ENCODE measurements at regions of chr4 and their contacts with region 1.

Region 1: DNA sequence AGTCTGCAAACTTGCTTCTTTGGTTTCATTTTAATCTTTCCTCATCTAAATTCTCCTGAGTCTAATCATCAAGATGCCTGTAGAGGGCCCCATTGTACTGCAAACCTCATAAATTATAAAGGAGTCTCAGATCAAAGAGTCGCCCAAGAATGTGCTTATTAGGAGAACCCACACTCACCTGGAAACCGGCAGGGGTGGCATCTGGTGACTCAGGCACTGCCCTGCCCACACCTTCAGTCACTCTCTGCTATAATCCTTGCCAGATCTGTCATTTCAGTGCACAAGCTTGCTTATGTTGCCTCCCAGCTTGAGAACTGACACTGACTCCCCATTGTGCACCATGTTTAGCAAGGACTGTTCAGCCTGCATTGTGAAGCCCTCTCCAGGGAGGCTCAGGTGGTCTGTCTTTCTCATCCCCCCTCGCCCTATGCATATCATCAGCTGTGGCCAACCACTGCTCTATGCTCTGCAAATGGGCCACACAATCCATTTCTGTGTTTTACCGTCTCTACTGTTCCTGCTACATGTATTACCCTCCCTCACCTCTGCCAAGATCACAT is 12.4 kb downstream of the EPGN start:
- DNase-seq: peak; percentile 85 to 92 (median 92)
- H3K4me3 ChIP-seq: peak overlapping the region in 4 of 7 experiments; percentile 8 to 68 (median 44)
- H3K27ac ChIP-seq: peak overlapping the region in 1 of 2 experiments; percentile 29
- H3K4me1 ChIP-seq: peaks cover 4 to 78% (median 34%) of the 10 kb centered on the region in 4 experiments
- H3K27me3 ChIP-seq: no peaks in the 10 kb centered on the region

Region 2: GRCh38 chr4:74228691-74229640 is 91.7 kb before region 1 on chr4:
- CTCF ChIA-PET with region 1: interaction called, 18 read pairs
- POLR2A ChIA-PET with region 1: interaction called, 4 read pairs
- DNase-seq: peak; percentile 87 to 91 (median 88)
- H3K4me3 ChIP-seq: no peak overlapping the region
- H3K27ac ChIP-seq: no peak overlapping the region
- H3K4me1 ChIP-seq: peaks cover 0 to 22% (median 15%) of the 10 kb centered on the region in 4 experiments
- H3K27me3 ChIP-seq: no peaks in the 10 kb centered on the region

Region 3: GRCh38 chr4:74335341-74336021 is 14.8 kb after region 1 on chr4:
- CTCF ChIA-PET with region 1: interaction called, 15 read pairs
- POLR2A ChIA-PET with region 1: no interaction called
- DNase-seq: no peak
- H3K4me3 ChIP-seq: no peak overlapping the region
- H3K27ac ChIP-seq: no peak overlapping the region
- H3K4me1 ChIP-seq: peaks cover 3 to 34% (median 6%) of the 10 kb centered on the region in 4 experiments
- H3K27me3 ChIP-seq: no peaks in the 10 kb centered on the region

Region 4: DNA sequence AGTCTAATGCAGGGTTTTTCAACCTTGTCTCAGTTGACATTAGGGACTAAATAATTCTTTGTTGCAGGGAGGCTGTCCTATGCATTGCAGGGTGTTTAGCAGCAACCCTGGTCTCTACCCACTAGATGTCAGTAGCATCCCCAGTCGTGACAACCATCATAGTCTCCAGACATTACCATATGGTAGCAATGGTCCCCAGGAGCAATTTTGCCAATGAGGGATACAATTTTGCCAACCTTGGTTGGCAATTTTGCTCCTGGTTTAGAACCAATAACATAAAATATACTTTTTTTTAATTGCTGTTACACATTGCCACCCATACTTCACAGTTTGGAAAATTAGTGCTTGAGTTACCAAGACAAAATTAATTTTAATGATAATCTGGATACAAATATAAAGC is 50.3 kb after region 1 on chr4:
- CTCF ChIA-PET with region 1: interaction called, 60 read pairs
- POLR2A ChIA-PET with region 1: no interaction called
- DNase-seq: peak; percentile 75 to 83 (median 78)
- H3K4me3 ChIP-seq: no peak overlapping the region
- H3K27ac ChIP-seq: peak overlapping the region in 1 of 2 experiments; percentile 38
- H3K4me1 ChIP-seq: peaks cover 0 to 62% (median 16%) of the 10 kb centered on the region in 4 experiments
- H3K27me3 ChIP-seq: no peaks in the 10 kb centered on the region

Region 5: DNA sequence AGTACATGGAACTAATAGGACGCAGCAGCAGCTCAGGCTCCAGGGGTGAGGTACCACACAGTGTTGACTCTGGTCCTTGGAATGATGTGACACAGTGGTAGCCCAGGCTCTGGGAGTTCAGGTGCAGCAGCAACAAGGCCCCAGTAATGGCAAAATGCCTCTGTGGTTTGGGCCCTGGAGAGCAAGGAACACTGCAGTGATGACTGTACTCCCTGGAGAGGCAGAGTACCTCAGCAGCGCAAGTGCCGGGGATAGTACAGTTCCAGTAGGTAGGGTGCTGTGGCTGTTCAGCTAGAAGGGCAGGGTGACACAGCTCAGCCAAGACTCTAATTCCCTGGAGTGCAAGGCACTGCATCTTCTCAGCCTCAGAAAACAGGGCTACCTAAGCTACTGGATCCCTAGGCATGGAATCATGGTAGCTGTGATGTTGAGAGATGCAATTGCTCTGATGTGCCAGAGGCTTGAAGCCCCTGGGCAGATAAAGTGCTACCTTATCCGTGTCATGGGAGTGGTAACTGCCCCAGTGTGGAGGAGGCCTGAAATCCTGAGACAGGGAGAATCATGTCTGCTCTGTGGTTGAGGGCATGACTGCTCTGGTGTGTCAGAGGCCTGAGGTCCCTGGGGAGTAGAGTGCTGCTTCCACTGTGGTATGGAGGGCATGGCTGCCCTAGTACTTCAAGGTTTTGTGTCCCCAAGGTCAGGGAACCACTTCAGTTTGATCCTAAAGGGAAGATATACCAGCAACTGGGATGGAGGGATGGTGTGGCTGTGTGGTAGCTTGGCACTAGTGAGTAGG is 179.5 kb after region 1 on chr4:
- CTCF ChIA-PET with region 1: no interaction called
- POLR2A ChIA-PET with region 1: no interaction called
- DNase-seq: no peak
- H3K4me3 ChIP-seq: no peak overlapping the region
- H3K27ac ChIP-seq: no peak overlapping the region
- H3K4me1 ChIP-seq: no peaks in the 10 kb centered on the region
- H3K27me3 ChIP-seq: no peaks in the 10 kb centered on the region

Region 6: GRCh38 chr4:74623041-74623440 is 302.4 kb after region 1 on chr4:
- CTCF ChIA-PET with region 1: interaction called, 34 read pairs
- POLR2A ChIA-PET with region 1: no interaction called
- DNase-seq: peak; percentile 68 to 85 (median 80)
- H3K4me3 ChIP-seq: no peak overlapping the region
- H3K27ac ChIP-seq: no peak overlapping the region
- H3K4me1 ChIP-seq: peaks cover 6 to 42% (median 17%) of the 10 kb centered on the region in 4 experiments
- H3K27me3 ChIP-seq: no peaks in the 10 kb centered on the region

Measured in common myeloid progenitor, CD34-positive (primary cell).